ENCODE measurements at regions of chr3 and their contacts with region 1.

Region 1: GRCh38 chr3:108153451-108153981 is 62.7 kb upstream of the CD47 start:
- DNase-seq: no peak
- H3K4me3 ChIP-seq: no peak overlapping the region
- CTCF ChIP-seq: peak; percentile 33

Region 2: GRCh38 chr3:108130701-108131474 is 22.6 kb before region 1 on chr3:
- CTCF ChIA-PET with region 1: interaction called, 20 read pairs
- POLR2A ChIA-PET with region 1: no interaction called
- DNase-seq: peak; percentile 69
- H3K4me3 ChIP-seq: no peak overlapping the region
- CTCF ChIP-seq: no peak

Region 3: DNA sequence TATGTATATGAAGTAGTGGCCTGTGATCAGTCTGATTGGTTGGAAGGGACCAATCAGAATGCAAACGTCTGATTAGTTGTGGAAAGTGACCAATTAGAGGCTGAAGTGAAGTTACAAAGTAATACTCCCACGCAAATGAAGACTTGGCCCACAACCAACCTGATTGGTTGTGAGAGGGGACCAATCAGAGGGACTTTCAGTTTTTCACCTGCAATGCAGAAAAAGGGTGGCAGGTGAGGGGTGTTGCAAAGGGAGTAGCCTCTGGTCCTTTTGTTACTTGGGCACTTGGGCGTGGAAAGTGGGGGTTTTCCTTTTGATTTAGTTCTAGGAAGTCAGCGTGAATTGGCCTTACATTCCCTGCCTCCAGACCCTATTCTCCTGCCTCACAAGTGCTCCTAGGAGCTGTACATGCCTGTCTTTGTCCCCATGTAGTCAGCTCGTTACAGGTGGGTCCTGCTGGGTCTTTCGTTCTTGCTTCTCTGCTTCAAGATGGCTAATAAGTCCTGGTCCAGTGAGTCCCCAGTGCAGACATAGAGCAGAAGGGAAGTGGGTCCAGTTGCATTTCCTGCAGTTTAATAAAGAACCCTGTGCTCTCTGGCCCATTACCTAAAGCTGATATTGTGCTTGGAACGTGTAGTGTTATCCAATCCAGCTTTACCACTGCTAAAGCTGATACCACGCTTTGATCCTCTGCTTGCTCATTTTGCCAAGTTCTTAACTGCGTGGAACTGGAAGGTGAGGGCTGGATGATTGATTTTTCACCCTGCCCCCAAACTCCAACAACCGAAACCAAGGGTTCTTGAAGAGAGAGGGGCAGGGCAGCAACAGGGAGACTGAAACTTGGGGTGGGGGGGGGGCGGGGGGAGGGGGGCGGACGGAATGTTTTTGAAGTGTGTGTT is 16.7 kb before region 1 on chr3:
- CTCF ChIA-PET with region 1: interaction called, 21 read pairs
- POLR2A ChIA-PET with region 1: no interaction called
- DNase-seq: no peak
- H3K4me3 ChIP-seq: no peak overlapping the region
- CTCF ChIP-seq: no peak

Region 4: DNA sequence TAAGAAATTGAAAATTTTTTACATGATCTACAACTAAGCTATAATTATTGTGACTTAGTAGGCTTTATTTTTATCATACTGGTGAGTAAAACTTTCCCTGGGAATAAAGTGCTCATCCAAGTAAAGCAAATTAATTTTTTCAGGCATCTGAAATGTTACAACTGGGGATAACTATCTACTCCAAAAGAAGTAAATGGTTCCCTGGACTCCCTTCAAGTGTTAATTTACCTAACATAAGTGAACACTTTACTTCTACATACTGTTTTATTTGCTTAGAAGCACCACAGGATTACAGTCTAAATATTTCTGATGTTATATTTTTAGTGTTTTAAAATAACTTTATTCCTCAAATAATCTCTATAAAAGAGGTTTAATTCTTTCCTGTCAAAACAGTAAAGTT is 10.9 kb after region 1 on chr3:
- CTCF ChIA-PET with region 1: interaction called, 22 read pairs
- POLR2A ChIA-PET with region 1: no interaction called
- DNase-seq: no peak
- H3K4me3 ChIP-seq: no peak overlapping the region
- CTCF ChIP-seq: no peak

Region 5: GRCh38 chr3:108406661-108407206 is 253.2 kb after region 1 on chr3:
- CTCF ChIA-PET with region 1: interaction called, 34 read pairs
- POLR2A ChIA-PET with region 1: no interaction called
- DNase-seq: no peak
- H3K4me3 ChIP-seq: no peak overlapping the region
- CTCF ChIP-seq: peak; percentile 70

Measured in AG04449 (cell line).